ENCODE measurements at regions of chr12 and their contacts with region 1.

Region 1: GRCh38 chr12:46209914-46210872 is 58.6 kb downstream of the SLC38A1 start:
- DNase-seq: no peak
- ATAC-seq: peak; percentile 86

Region 2: DNA sequence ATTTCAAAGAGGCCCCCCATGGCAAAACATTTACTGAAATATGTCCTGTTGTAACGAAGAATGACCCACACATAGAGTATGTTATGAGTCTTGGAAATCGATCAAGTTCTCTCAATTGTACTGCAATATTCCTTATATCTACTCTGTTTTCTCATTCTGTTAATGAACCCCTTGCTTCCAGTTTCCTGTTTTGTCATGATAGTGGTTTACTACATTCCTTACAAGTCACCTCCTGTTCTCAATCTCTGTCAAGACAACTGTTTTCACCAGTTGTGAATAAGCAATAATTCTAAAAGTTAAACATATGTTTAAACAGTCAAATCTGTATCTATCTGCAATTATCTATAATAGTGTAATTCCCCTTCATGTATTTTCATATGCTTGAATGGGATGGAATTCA is 497.1 kb before region 1 on chr12:
- intact Hi-C with region 1: no loop called
- DNase-seq: no peak
- ATAC-seq: no peak

Region 3: DNA sequence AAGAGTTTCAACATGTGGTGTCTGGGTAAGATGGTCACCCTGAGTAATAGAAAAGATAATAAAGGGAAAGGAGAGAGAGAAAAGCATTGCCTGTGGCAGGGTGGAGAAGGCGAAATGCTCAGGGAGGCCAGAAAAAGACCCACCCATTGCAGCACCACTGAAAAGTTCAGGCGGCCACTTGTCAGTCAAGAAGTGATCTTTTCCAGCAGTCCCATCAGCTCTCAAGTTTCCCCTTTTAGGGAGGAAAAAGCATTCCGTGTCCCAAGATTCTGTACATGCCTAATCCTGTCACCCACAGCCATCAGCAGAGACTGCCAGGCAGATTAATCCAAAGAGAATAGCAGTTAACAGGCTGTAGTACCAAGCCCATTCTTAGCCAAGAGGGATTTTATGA is 46.7 kb after region 1 on chr12:
- intact Hi-C with region 1: no loop called
- DNase-seq: no peak
- ATAC-seq: no peak

Region 4: GRCh38 chr12:46268590-46269558 is 58.7 kb after region 1 on chr12 and contains the start of gene SLC38A1:
- intact Hi-C with region 1: loop called (anchors 1 kb)
- DNase-seq: peak; percentile 95
- ATAC-seq: peak; percentile 88
- total RNA-seq, gene SLC38A1: 140 TPM